Left ventricle myocardium superior (tissue), 1 donor: ENCODE measurements at regions of chr12 and their contacts with region 1.

Region 1: GRCh38 chr12:96335270-96335669 is 65.0 kb downstream of the CDK17 start:
- DNase-seq: no peak
- ATAC-seq: no peak

Region 2: DNA sequence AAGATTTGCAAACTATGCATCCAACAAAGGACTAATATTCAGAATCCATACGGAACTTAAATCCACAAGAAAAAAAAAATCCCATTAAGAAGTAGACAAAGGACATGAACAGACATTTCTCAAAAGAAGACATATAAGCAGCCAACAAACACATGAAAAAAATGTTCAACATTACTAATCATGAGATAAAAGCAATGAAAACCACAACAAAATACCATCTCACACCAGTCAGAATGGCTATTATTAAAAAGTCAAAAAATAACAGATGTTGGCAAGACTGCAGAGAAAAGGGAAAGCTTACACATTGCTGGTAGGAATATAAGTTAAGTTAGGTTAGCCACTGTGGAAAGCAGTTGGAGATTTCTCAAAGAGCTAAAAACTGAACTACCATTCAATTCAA is 48.7 kb after region 1 on chr12:
- intact Hi-C with region 1: loop called (anchors 10 kb)
- DNase-seq: no peak
- ATAC-seq: no peak